ENCODE measurements at regions of chr4 and their contacts with region 1.

Region 1: GRCh38 chr4:73593631-73594241 is 26.5 kb downstream of the RASSF6 start:
- DNase-seq: no peak
- ATAC-seq: no peak
- H3K4me3 ChIP-seq: no peak overlapping the region
- H3K27ac ChIP-seq: no peak overlapping the region
- H3K4me1 ChIP-seq: no peaks in the 10 kb centered on the region
- H3K27me3 ChIP-seq: no peaks in the 10 kb centered on the region
- CTCF ChIP-seq: peak; percentile 64; the same call in 1 of the 2 replicates

Region 2: GRCh38 chr4:73208376-73208775 is 385.4 kb before region 1 on chr4:
- CTCF ChIA-PET with region 1: no interaction called
- POLR2A ChIA-PET with region 1: no interaction called
- in situ Hi-C with region 1: no loop called
- intact Hi-C with region 1: no loop called
- DNase-seq: no peak
- ATAC-seq: no peak
- H3K4me3 ChIP-seq: no peak overlapping the region
- H3K27ac ChIP-seq: no peak overlapping the region
- H3K4me1 ChIP-seq: no peaks in the 10 kb centered on the region
- H3K27me3 ChIP-seq: no peaks in the 10 kb centered on the region
- CTCF ChIP-seq: no peak

Region 3: GRCh38 chr4:73348185-73348584 is 245.6 kb before region 1 on chr4:
- CTCF ChIA-PET with region 1: no interaction called
- POLR2A ChIA-PET with region 1: no interaction called
- in situ Hi-C with region 1: no loop called
- intact Hi-C with region 1: no loop called
- DNase-seq: no peak
- ATAC-seq: no peak
- H3K4me3 ChIP-seq: no peak overlapping the region
- H3K27ac ChIP-seq: no peak overlapping the region
- H3K4me1 ChIP-seq: no peaks in the 10 kb centered on the region
- H3K27me3 ChIP-seq: no peaks in the 10 kb centered on the region
- CTCF ChIP-seq: no peak

Region 4: DNA sequence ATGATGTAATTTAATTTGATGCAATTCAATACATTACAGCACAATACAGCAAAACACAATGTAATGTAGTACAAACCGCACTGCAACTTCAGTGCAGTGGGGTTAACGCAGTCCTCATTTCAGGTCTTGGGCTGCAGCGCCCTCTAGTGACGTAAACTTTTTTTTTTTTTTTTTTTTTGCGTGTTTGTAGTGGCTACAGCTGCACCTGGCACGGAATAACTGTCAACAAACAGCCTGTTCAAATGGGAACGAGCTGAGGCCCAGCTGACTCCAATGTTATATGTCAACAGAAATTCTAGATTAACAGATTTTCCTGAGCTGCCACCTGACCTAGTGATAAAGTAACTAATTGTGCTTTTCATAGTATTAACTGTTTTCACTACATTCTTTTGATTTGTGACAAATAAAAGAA is 60.0 kb after region 1 on chr4:
- CTCF ChIA-PET with region 1: no interaction called
- POLR2A ChIA-PET with region 1: no interaction called
- in situ Hi-C with region 1: no loop called
- intact Hi-C with region 1: loop called (anchors 5 kb)
- DNase-seq: no peak
- ATAC-seq: no peak
- H3K4me3 ChIP-seq: no peak overlapping the region
- H3K27ac ChIP-seq: no peak overlapping the region
- H3K4me1 ChIP-seq: peaks cover 2% of the 10 kb centered on the region; the same call in 1 of the 2 replicates
- H3K27me3 ChIP-seq: no peaks in the 10 kb centered on the region
- CTCF ChIP-seq: peak; percentile 65

Region 5: GRCh38 chr4:73922766-73923630 is 329.3 kb after region 1 on chr4:
- CTCF ChIA-PET with region 1: no interaction called
- POLR2A ChIA-PET with region 1: no interaction called
- in situ Hi-C with region 1: no loop called
- intact Hi-C with region 1: loop called (anchors 5 kb)
- DNase-seq: no peak
- ATAC-seq: no peak
- H3K4me3 ChIP-seq: no peak overlapping the region
- H3K27ac ChIP-seq: peak overlapping the region; percentile 4; the same call in 1 of the 2 replicates
- H3K4me1 ChIP-seq: peaks cover 4% of the 10 kb centered on the region; the same call in 1 of the 2 replicates
- H3K27me3 ChIP-seq: no peaks in the 10 kb centered on the region
- CTCF ChIP-seq: peak; percentile 43; the same call in 1 of the 2 replicates

Measured in Panc1 (cell line).